Right ventricle myocardium inferior (tissue), 1 donor: ENCODE measurements at regions of chr11 and their contacts with region 1.

Region 1: GRCh38 chr11:32435511-32435941 is at the start of gene WT1:
- DNase-seq: peak; percentile 80
- ATAC-seq: peak; percentile 85
- total RNA-seq, gene WT1: 3.1 TPM

Region 2: DNA sequence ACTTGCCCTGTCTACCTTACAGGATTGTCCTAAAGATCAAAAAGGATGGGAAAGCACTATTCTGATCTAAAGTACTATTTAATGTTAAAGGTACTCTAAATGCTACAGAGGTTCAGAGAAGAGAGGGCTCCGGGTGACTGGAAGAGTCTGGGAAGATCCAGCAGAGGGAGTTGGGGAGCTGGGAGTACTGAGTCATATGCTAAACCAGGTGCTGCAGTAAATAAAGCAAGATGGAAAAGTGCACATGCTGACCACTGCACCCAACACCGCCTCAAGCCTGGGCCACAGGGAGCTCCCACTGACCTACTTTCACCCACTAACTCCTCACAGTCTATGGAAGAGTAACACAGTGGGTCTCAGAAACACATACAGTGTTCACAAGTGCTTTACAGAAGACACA is 49.5 kb before region 1 on chr11:
- intact Hi-C with region 1: loop called (anchors 5 kb)
- DNase-seq: no peak
- ATAC-seq: no peak

Region 3: DNA sequence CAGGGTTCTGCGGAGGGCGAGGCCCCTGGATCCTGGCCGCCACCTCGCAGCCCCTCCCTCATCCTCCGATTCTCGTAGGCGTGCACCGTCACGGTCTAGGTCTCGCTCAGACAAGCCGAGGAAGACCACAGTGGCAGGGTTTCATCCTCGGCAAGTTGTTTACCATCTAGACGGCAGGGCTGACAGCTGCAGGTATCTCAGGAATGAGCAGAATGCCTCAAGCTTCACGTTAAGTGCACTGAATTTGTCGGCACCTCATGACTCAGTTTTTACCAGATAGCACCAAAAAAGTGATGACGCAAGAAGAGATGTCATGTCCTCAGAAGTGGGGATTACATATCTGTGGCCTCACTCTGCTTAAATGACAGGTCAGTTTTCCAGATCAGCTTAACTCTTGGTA is 35.3 kb before region 1 on chr11:
- intact Hi-C with region 1: no loop called
- DNase-seq: no peak
- ATAC-seq: no peak

Region 4: DNA sequence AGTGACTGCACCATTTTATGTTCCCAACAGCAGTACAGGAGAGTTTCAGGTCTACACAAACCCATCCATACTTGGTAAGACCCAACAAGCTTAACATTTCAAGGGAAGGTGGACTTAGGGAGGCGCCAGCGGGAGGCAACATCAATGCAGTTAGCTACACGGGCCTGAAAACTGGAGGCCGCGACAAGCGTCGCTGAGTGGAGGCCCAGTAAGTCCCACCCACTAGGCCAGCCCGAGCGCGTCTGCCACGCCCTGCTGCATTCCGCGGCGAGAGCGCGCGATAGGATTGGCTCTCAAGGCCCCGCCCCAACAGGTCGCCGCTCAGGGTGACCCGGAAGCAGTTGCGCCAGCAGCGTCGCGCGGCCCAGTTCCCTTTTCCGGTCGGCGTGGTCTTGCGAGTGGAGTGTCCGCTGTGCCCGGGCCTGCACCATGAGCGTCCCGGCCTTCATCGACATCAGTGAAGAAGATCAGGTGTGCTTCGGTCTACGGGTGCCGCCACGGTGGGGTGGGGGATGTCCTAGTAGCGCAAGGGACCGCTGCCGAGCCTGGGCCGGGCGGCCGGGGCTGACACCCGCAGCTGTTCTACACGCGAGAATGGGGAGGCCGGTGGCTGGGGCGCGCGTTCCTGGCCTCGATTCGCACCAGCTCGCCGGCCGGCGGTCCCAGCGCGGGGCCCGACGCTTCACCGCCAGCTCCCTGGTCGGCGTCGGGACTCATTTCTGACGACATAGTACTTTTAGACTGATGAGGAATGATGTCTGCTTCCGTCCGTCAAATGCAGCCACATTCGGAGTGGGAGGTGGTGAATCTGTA is 148.1 kb after region 1 on chr11 and contains the start of gene EIF3M:
- intact Hi-C with region 1: loop called (anchors 10 kb)
- DNase-seq: peak; percentile 99
- ATAC-seq: peak; percentile 100
- total RNA-seq, gene EIF3M: 185 TPM